Activated CD4-positive, alpha-beta T cell treated with anti-CD3 and anti-CD28 coated beads, Interleukin-2, amount 10 ng/mL, durations not matched to agents 24 days and 14 days (primary cell): ENCODE measurements at regions of chr16 and their contacts with region 1.

Region 1: DNA sequence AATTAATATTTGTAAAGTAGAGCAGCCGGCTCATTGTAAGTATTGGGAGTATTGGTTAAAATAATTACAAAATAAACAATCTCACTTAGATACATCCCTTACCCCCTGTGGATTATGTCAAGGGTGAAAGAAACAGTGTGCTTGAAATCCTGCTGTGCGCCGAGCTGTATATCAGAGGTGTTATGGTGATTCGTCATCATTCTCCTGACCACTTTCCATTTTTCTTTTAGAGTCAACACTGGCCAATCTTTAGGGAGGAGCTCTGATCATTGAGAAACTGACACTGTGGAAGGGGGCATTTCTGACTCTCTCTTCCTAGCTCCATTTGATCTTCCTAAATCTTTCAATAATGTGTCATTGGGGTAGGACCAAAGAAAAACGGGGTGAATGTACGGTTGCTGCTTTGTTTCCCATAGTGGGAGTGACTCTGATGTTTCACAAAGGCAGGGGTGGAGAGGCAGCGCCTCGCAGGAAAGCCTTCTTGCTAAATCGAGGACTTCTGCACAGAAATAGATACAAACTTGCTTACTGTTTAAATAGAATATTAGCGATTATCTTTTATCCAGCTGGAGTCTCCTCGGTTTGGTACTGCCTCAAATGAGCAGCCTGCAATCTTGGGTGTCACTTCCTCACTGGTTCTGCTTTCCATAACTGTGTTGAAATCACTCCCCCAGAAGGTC is 123.4 kb downstream of the PRKCB start:
- DNase-seq: no peak
- H3K4me3 Mint-ChIP-seq: peak overlapping the region; percentile 59
- H3K27ac Mint-ChIP-seq: peak overlapping the region; percentile 79
- H3K4me1 Mint-ChIP-seq: peaks cover 55% of the 10 kb centered on the region
- H3K27me3 Mint-ChIP-seq: no peaks in the 10 kb centered on the region

Region 2: GRCh38 chr16:23842137-23842600 is 117.0 kb before region 1 on chr16:
- intact Hi-C with region 1: loop called (anchors 1 kb)
- DNase-seq: peak; percentile 73
- H3K4me3 Mint-ChIP-seq: peak overlapping the region; percentile 28
- H3K27ac Mint-ChIP-seq: peak overlapping the region; percentile 87
- H3K4me1 Mint-ChIP-seq: peaks cover 70% of the 10 kb centered on the region
- H3K27me3 Mint-ChIP-seq: no peaks in the 10 kb centered on the region

Region 3: DNA sequence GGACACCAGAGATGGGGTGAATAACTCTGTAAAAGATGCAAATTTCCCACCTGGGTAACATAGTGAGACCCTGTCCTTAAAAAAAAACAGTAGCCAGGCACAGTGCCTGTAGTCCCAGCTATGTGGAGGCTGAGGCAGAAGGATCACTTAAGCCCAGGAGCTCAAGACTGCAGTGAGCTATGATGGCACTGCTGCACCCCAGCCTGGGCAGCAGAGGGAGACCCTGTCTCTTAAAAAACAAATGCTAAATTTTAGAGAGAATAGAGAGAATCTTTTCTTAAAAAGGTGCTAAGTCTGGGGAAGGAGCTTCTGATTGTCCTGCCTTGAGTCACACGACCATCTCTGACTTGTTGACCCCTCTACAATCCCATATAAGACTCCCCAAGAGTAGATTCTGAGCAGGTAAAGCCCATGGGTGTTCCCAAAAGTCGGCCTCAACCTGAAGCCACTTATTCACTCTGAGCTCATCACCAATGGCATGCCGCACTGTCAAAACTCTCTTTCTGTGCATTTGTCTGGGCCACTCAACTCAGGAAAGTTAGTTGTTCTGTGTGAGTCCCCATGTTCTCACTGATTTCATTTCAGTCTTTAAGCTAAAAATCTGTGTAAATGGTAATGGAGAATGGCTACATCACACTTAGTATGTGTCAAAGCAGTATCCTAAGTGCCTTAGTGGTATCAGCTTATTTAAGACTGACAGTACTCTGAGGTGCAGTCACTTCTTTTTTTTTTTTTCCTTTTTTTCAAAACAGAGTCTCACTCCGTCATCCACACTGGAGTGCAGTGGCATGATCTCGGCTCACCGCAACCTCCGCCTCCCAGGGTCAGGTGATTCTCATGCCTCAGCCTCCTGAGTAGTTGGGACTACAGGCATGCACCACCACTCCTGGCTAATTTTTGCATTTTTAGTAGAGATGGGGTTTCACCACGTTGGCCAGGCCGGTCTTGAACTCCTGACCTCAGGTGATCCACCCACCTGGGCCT is 81.8 kb before region 1 on chr16:
- intact Hi-C with region 1: loop called (anchors 2 kb)
- DNase-seq: no peak
- H3K4me3 Mint-ChIP-seq: no peak overlapping the region
- H3K27ac Mint-ChIP-seq: no peak overlapping the region
- H3K4me1 Mint-ChIP-seq: peaks cover 54% of the 10 kb centered on the region
- H3K27me3 Mint-ChIP-seq: no peaks in the 10 kb centered on the region

Region 4: DNA sequence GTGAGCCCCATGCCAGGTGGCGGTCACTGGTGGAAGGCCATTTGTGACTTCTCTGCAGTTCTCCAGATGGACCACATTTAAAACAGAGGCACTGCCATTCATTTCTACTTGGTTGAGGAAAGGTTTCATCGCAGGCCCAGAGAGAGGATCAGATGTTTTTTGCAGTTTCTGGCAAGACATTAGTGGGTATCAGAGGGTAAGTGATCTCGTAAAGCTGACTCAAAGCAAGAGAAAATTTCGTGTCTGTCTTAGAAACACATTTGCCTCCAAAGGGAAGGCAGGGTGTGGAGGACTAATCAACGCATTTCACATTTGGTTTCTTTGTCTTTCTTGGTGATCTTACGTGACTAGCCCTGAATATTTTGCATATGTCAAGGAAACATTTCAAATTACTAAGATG is 41.6 kb before region 1 on chr16:
- intact Hi-C with region 1: loop called (anchors 5 kb)
- DNase-seq: no peak
- H3K4me3 Mint-ChIP-seq: no peak overlapping the region
- H3K27ac Mint-ChIP-seq: no peak overlapping the region
- H3K4me1 Mint-ChIP-seq: peaks cover 21% of the 10 kb centered on the region
- H3K27me3 Mint-ChIP-seq: no peaks in the 10 kb centered on the region

Region 5: GRCh38 chr16:23930791-23931190 is 28.4 kb before region 1 on chr16:
- intact Hi-C with region 1: no loop called
- DNase-seq: no peak
- H3K4me3 Mint-ChIP-seq: no peak overlapping the region
- H3K27ac Mint-ChIP-seq: no peak overlapping the region
- H3K4me1 Mint-ChIP-seq: peaks cover 18% of the 10 kb centered on the region
- H3K27me3 Mint-ChIP-seq: no peaks in the 10 kb centered on the region

Region 6: GRCh38 chr16:23941963-23942564 is 17.1 kb before region 1 on chr16:
- intact Hi-C with region 1: no loop called
- DNase-seq: no peak
- H3K4me3 Mint-ChIP-seq: no peak overlapping the region
- H3K27ac Mint-ChIP-seq: no peak overlapping the region
- H3K4me1 Mint-ChIP-seq: peaks cover 17% of the 10 kb centered on the region
- H3K27me3 Mint-ChIP-seq: no peaks in the 10 kb centered on the region

Region 7: GRCh38 chr16:23999663-24000062 is 40.5 kb after region 1 on chr16:
- intact Hi-C with region 1: loop called (anchors 1 kb)
- DNase-seq: no peak
- H3K4me3 Mint-ChIP-seq: no peak overlapping the region
- H3K27ac Mint-ChIP-seq: peak overlapping the region; percentile 71
- H3K4me1 Mint-ChIP-seq: peaks cover 17% of the 10 kb centered on the region
- H3K27me3 Mint-ChIP-seq: no peaks in the 10 kb centered on the region

Region 8: DNA sequence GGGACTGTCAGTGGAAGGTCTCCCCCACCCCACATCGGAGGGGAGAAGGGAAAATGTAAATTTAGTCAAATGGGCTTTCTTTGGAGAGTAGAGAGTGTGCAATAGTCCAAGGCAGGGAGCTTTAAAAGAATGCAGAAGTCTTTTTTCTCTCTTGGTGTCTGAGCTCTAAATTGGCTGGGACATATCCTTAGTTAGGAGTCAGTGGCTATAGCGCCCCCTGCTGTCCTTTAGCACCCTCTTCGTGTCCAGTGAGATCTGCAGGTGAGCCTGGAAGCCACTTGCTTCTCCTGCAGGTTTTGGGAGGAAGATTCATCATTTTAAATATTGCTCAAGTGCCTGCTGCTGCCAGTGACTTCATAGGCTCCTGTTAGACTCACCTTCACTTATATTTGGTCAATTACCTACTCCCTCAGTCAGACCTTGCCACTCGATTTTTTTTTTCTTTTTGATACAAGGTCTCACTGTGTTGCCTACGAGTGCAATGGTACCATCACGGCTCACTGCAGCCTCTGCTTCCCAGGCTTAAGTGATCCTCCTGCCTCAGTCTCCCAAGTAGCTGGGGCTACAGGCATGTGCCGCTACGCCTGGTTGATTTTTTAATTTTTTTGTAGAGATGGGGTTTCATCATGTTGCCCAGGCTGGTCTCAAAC is 51.4 kb after region 1 on chr16:
- intact Hi-C with region 1: loop called (anchors 2 kb)
- DNase-seq: peak; percentile 93
- H3K4me3 Mint-ChIP-seq: no peak overlapping the region
- H3K27ac Mint-ChIP-seq: no peak overlapping the region
- H3K4me1 Mint-ChIP-seq: peaks cover 54% of the 10 kb centered on the region
- H3K27me3 Mint-ChIP-seq: no peaks in the 10 kb centered on the region